AG04450 (cell line): ENCODE measurements at regions of chr3 and their contacts with region 1.

Region 1: DNA sequence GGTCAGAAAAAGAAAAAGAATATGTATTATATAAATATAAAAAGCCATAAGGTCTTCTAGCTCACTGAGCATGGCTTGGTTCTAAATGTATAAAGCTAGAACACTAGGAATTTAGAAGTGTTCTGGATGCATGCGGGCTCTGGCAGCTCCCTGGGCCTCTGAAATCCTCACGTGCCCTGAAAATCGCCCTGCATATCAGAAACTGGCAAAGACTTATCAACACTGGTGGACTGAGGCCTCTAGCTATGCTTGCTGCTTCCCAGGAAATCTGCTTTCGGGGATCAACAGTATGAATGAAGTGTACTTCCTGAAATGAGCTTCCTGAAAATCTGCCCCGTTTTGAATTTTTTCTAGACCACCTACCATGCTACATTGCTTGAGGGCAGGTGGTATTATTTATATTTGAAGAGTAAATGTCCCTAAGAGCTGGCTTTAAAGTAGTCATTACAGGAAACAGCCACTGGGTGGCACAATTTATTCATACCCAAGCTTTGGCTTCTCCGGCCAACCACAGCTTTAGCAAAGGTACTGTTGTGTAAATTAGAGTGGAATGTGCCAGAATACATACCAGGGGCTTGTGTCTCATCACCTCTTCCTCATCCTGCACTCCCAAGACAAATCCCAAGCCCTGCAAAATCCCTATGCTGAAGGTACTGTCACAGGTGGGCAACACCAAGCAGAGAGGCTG is 17.7 kb downstream of the CRTAP start:
- DNase-seq: peak; percentile 41
- H3K4me3 ChIP-seq: no peak overlapping the region
- H3K27ac ChIP-seq: no peak overlapping the region
- H3K27me3 ChIP-seq: no peaks in the 10 kb centered on the region
- CTCF ChIP-seq: peak; percentile 72

Region 2: GRCh38 chr3:32947789-32948238 is 183.7 kb before region 1 on chr3:
- CTCF ChIA-PET with region 1: interaction called, 14 read pairs
- POLR2A ChIA-PET with region 1: no interaction called
- DNase-seq: peak; percentile 51
- H3K4me3 ChIP-seq: no peak overlapping the region
- H3K27ac ChIP-seq: no peak overlapping the region
- H3K27me3 ChIP-seq: peaks cover 9% of the 10 kb centered on the region
- CTCF ChIP-seq: peak; percentile 84

Region 3: GRCh38 chr3:33113772-33114621 is 17.5 kb before region 1 on chr3 and contains the start of gene CRTAP:
- CTCF ChIA-PET with region 1: interaction called, 13 read pairs
- POLR2A ChIA-PET with region 1: no interaction called
- DNase-seq: peak; percentile 87
- H3K4me3 ChIP-seq: peak within 1 kb of the TSS; percentile 80
- H3K27ac ChIP-seq: peak within 1 kb of the TSS; percentile 88
- H3K27me3 ChIP-seq: no peaks in the 10 kb centered on the region
- CTCF ChIP-seq: no peak
- polyA plus RNA-seq, gene CRTAP: 314 and 338 TPM in 2 replicates

Region 4: DNA sequence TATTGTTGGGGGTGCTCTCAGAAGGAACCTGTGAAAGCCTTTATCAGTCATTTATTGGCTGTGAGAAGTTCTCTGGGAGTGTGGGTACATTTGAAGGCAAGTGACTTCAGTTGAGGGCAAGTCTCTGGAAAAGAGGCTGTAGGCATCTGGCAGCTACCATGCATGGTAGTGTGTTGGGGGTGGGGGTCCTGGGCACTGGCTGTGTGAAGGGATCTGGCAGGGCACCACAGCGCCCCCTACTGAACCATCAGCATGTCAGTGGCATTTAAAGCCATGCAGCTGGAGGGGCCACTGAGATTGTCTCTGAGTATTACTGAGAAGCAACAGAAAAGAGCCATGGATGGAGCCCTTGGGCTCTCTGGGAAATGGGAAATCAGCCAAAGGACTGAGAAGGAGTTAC is 13.0 kb after region 1 on chr3:
- CTCF ChIA-PET with region 1: interaction called, 22 read pairs
- POLR2A ChIA-PET with region 1: no interaction called
- DNase-seq: no peak
- H3K4me3 ChIP-seq: no peak overlapping the region
- H3K27ac ChIP-seq: no peak overlapping the region
- H3K27me3 ChIP-seq: no peaks in the 10 kb centered on the region
- CTCF ChIP-seq: 0 out of 2 replicates have a peak, but pooled peaks have one; percentile 11

Region 5: GRCh38 chr3:33360136-33360825 is 228.8 kb after region 1 on chr3:
- CTCF ChIA-PET with region 1: interaction called, 19 read pairs
- POLR2A ChIA-PET with region 1: no interaction called
- DNase-seq: no peak
- H3K4me3 ChIP-seq: no peak overlapping the region
- H3K27ac ChIP-seq: peak overlapping the region; percentile 21
- H3K27me3 ChIP-seq: no peaks in the 10 kb centered on the region
- CTCF ChIP-seq: no peak

Region 6: DNA sequence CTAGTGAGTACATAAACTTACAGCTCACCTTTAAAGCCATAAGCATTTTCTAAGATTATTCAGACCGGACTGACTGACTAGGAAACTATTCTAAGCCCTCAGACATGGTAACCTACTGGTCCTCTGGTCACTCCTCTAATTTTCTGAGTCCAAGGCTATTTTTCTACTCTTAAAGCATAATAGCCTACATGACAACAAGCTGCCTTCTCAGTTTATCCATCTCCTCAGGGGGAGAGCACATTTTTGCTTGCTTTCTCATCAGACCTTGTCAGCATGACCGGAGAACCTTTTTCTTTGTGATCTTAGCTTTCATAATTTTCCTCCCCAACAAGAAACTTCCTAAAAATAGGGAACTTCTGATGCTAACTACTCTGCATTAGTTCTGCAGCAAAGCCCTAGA is 270.3 kb after region 1 on chr3:
- CTCF ChIA-PET with region 1: interaction called, 12 read pairs
- POLR2A ChIA-PET with region 1: no interaction called
- DNase-seq: no peak
- H3K4me3 ChIP-seq: no peak overlapping the region
- H3K27ac ChIP-seq: no peak overlapping the region
- H3K27me3 ChIP-seq: no peaks in the 10 kb centered on the region
- CTCF ChIP-seq: no peak

Region 7: DNA sequence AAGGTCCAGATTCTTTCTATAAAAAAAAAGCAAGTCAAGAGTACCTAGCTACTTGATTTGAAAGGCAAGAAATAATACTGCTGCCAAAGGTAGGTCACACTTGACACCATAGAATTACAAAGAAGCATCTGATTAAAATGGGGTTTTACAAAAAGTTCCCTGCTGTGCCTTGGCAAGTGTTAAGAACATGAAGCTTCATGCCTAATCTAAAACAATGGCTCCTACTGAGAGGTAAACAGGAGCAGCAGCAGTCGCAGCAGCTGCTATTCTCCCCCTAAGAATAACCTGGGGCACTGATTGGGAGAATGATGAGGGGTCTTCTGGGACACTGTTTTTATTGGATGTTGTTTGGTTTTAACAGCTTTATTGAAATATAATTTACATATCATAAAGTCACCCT is 294.6 kb after region 1 on chr3:
- CTCF ChIA-PET with region 1: no interaction called
- POLR2A ChIA-PET with region 1: no interaction called
- DNase-seq: no peak
- H3K4me3 ChIP-seq: no peak overlapping the region
- H3K27ac ChIP-seq: no peak overlapping the region
- H3K27me3 ChIP-seq: no peaks in the 10 kb centered on the region
- CTCF ChIP-seq: no peak